GM13976 (cell line): ENCODE measurements at regions of chr3 and their contacts with region 1.

Region 1: GRCh38 chr3:122268257-122269024 is 56.6 kb upstream of the CSTA start:
- DNase-seq: peak; percentile 44
- CTCF ChIP-seq: no peak

Region 2: GRCh38 chr3:121995161-121996137 is 273.0 kb before region 1 on chr3:
- in situ Hi-C with region 1: loop called (anchors 10 kb)
- DNase-seq: no peak
- CTCF ChIP-seq: peak; percentile 58

Region 3: GRCh38 chr3:122101646-122102045 is 166.8 kb before region 1 on chr3:
- in situ Hi-C with region 1: loop called (anchors 5 kb)
- DNase-seq: peak; percentile 26
- CTCF ChIP-seq: peak; percentile 50